Left colon (tissue), 2 donors: ENCODE measurements at regions of chr6 and their contacts with region 1.

Region 1: GRCh38 chr6:108655806-108656651 is 95.3 kb downstream of the FOXO3 start:
- DNase-seq: no peak
- ATAC-seq: peak; percentile 19

Region 2: DNA sequence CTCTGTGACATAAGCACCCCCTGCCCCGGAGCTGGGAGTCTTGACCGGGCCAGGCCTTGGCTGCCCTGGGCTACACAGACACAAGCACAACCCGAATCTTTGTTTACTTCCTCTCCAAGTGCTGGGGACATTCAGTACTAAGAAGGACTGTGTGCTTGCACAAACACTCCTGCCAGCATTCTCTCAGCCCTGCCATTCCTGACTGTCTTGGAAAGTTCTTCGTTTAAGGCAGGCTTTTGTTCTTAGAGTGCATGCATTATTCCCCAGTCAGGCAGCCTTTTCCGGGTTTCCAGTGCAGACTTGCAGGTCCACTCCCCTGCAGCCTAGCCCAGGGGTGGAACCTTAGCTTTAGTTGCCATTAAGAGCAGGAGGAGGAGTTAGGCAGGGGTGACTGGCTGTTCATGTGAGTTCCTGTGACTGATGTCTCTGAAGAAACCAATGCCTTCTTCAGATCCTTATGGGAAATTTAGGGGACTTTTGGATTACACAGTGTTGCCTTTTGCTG is 66.7 kb before region 1 on chr6:
- intact Hi-C with region 1: loop called in 1 of 2 experiments (anchors 10 kb)
- DNase-seq: peak; percentile 74 to 90
- ATAC-seq: peak; percentile 97

Region 3: DNA sequence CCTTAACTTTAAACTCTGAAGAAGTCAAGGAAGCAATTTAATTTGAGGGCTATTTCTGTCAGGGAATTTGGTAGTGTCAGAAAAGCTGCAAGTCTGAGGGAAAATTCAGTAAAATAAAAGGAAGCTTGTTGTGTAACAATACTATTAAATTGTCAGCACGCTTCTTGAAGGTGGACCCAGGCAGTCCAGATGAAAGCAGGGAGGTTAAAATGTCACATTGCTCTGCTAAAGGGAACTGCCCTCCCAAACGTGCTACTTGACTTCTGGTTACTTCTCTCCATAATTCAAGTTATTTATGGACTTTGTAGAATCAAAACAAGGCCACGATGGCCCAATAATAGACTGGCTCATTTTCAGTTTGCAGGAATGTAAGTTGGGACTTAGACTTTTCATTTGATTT is 164.0 kb after region 1 on chr6:
- intact Hi-C with region 1: no loop called
- DNase-seq: no peak
- ATAC-seq: no peak